Lower leg skin (tissue), 4 donors: ENCODE measurements at regions of chr13 and their contacts with region 1.

Region 1: GRCh38 chr13:23466144-23467002 is 32.9 kb upstream of the SACS start:
- DNase-seq: peak; percentile 55 to 89
- H3K4me3 ChIP-seq: peak overlapping the region; percentile 12
- CTCF ChIP-seq: no peak
- POLR2A ChIP-seq: no peak

Region 2: DNA sequence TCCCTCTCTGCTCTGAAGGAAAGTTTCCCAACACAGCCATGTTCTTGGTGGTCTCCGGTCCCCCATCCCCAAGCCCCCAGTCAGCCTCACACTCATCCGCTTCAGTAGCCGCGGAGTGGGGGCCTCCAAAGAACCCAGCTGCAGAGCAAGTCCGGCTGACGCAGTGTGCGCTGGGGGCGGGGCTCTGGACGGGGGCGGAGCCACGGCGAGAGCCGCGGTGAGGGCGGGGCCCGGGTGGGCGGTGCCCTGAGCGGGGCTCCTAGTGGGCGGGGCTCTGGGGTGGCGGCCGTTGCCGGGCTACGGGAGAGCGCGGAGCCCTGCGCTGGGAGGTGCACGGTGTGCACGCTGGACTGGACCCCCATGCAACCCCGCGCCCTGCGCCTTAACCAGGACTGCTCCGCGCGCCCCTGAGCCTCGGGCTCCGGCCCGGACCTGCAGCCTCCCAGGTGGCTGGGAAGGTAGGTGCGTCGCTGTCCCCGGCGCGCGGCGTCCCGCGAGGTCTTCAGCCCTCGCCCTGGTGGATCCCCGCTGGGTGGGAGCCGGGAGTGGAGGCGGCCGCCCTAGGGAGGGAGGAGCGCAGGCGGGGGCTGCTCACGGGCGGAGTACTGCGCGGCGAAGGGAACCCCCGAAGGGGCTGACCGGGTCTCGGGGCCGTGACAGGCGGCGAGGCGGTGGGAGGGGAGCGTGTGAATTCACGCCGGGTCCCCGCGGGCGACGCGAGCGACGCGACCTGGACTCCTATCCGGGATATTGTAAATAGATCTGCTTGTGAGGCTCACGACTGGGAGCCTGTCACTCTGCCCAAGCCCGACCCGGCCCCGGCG is 112.9 kb after region 1 on chr13:
- intact Hi-C with region 1: loop called (anchors 10 kb)
- DNase-seq: peak; percentile 89 to 97
- H3K4me3 ChIP-seq: peak overlapping the region; percentile 54
- CTCF ChIP-seq: no peak
- POLR2A ChIP-seq: peak in 1 of 2 donors; percentile 42

Region 3: DNA sequence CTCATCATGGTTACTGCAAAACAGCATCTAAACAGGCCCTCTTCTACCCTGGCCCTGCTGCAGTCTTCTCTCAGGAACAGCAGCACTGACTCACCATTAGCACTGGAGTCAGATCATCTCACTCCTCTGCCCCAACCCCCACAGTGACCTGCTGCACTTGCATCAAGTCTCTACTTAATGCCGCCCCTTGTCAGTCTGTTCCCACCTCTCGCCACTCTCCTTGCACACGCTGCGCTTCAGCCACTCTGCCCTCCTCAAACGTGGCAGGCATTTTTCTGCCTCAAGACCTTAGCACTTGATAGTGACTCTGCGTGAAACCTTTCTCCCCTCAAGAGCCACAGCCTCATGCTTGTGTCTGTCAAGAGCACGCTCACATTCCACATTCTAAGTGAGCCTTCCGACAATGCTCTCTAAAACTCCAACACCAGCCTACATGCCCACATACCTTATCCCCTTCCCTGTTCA is 400.7 kb after region 1 on chr13:
- intact Hi-C with region 1: loop called (anchors 5 kb)
- DNase-seq: no peak
- H3K4me3 ChIP-seq: no peak overlapping the region
- CTCF ChIP-seq: no peak
- POLR2A ChIP-seq: no peak

Region 4: GRCh38 chr13:24381539-24382265 is 915.3 kb after region 1 on chr13:
- intact Hi-C with region 1: no loop called
- DNase-seq: no peak
- H3K4me3 ChIP-seq: no peak overlapping the region
- CTCF ChIP-seq: no peak
- POLR2A ChIP-seq: no peak